ENCODE measurements at regions of chr16 and their contacts with region 1.

Region 1: GRCh38 chr16:48231727-48232492 is 12.2 kb upstream of the LONP2 start:
- DNase-seq: peak in 2 of 4 experiments; percentile 25 to 46
- ATAC-seq: peak; percentile 95
- H3K4me3 ChIP-seq: no peak overlapping the region
- H3K27ac ChIP-seq: no peak overlapping the region
- H3K4me1 ChIP-seq: no peaks in the 10 kb centered on the region
- H3K27me3 ChIP-seq: peaks cover 12 to 24% of the 10 kb centered on the region in 2 experiments
- CTCF ChIP-seq: peak; percentile 57 to 70 (median 59)
- EP300 ChIP-seq: no peak
- POLR2A ChIP-seq: no peak
- RAD21 ChIP-seq: peak; percentile 28 to 64; a peak in 2 of 4 replicates

Region 2: GRCh38 chr16:48432136-48432535 is 200.2 kb after region 1 on chr16:
- CTCF ChIA-PET with region 1: interaction called, 4 read pairs
- POLR2A ChIA-PET with region 1: interaction called, 3 read pairs
- in situ Hi-C with region 1: no loop called
- intact Hi-C with region 1: loop called (anchors 10 kb)
- DNase-seq: no peak
- ATAC-seq: no peak; the same call in 2 of the 3 replicates
- H3K4me3 ChIP-seq: no peak overlapping the region
- H3K27ac ChIP-seq: no peak overlapping the region
- H3K4me1 ChIP-seq: no peaks in the 10 kb centered on the region
- H3K27me3 ChIP-seq: peaks cover 10 to 27% of the 10 kb centered on the region in 2 experiments; a peak in 4 of 5 replicates
- CTCF ChIP-seq: no peak
- EP300 ChIP-seq: no peak
- POLR2A ChIP-seq: no peak
- RAD21 ChIP-seq: no peak

Region 3: GRCh38 chr16:48535831-48536613 is 304.1 kb after region 1 on chr16:
- CTCF ChIA-PET with region 1: no interaction called
- POLR2A ChIA-PET with region 1: no interaction called
- in situ Hi-C with region 1: no loop called
- intact Hi-C with region 1: loop called (anchors 10 kb)
- DNase-seq: no peak
- ATAC-seq: no peak
- H3K4me3 ChIP-seq: no peak overlapping the region
- H3K27ac ChIP-seq: no peak overlapping the region
- H3K4me1 ChIP-seq: peaks cover 0 to 4% of the 10 kb centered on the region in 2 experiments; a peak in 2 of 5 replicates
- H3K27me3 ChIP-seq: peaks cover 3 to 13% of the 10 kb centered on the region in 2 experiments; a peak in 4 of 5 replicates
- CTCF ChIP-seq: no peak
- EP300 ChIP-seq: no peak
- POLR2A ChIP-seq: no peak
- RAD21 ChIP-seq: no peak

Measured in K562 (cell line).